ENCODE measurements at regions of chr16 and their contacts with region 1.

Region 1: DNA sequence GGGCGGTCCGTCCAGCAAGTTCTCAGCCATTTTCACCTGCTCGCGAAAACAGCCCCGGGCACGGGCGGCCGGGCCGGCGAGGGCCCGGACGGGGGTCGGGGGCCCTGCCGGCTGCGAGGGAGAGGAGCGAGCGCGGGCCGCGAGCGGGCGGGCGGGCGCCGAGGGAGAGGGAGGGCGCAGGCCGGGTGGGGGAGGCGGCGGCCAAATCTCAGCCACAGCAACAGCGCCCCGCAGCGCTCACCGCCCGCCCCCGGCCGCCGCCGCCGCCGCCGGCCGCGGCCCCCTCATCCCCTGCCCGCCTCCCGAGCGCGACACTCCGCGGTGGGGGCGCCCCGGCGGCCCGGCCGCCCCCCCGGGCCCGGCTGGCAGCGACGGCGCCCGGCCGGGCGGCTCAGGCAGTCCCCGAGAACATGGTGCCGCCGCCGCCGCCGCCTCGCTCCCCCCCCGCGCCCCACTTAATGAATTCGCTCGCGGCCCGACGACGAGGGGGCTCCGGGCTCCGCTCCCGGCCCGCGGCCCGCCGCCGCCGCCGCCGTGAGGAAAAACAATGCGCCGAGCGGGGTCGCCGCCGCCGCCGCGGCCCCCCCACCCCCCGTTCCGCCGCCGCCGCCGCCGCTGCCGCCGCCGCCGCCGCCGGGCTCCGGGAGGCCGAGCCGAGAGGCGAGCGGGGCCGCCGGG is 487 bp downstream of the CREBBP start:
- DNase-seq: peak; percentile 71 to 78
- H3K4me3 ChIP-seq: peak overlapping the region; percentile 96 to 99
- H3K27ac ChIP-seq: peak overlapping the region; percentile 83 to 99
- H3K4me1 ChIP-seq: peaks cover 4 to 13% of the 10 kb centered on the region in 2 donors
- H3K27me3 ChIP-seq: no peaks in the 10 kb centered on the region
- CTCF ChIP-seq: peak in 2 of 4 experiments; percentile 19 to 55
- POLR2A ChIP-seq: no peak

Region 2: GRCh38 chr16:3690470-3690928 is 189.5 kb before region 1 on chr16:
- intact Hi-C with region 1: loop called (anchors 10 kb)
- DNase-seq: peak; percentile 94 to 96
- H3K4me3 ChIP-seq: peak overlapping the region; percentile 26 to 28
- H3K27ac ChIP-seq: peak overlapping the region; percentile 71 to 77
- H3K4me1 ChIP-seq: no peaks in the 10 kb centered on the region
- H3K27me3 ChIP-seq: no peaks in the 10 kb centered on the region
- CTCF ChIP-seq: peak; percentile 89 to 97 (median 94)
- POLR2A ChIP-seq: peak in 1 of 2 donors; percentile 10

Region 3: GRCh38 chr16:3829631-3830536 is 50.1 kb before region 1 on chr16:
- intact Hi-C with region 1: no loop called
- DNase-seq: no peak
- H3K4me3 ChIP-seq: no peak overlapping the region
- H3K27ac ChIP-seq: no peak overlapping the region
- H3K4me1 ChIP-seq: peaks cover under 1 to 8% of the 10 kb centered on the region in 2 donors
- H3K27me3 ChIP-seq: no peaks in the 10 kb centered on the region
- CTCF ChIP-seq: no peak
- POLR2A ChIP-seq: no peak

Region 4: GRCh38 chr16:3961449-3961849 is 81.4 kb after region 1 on chr16:
- intact Hi-C with region 1: no loop called
- DNase-seq: peak in 1 of 2 donors; percentile 54
- H3K4me3 ChIP-seq: peak overlapping the region in 1 of 2 donors; percentile 43
- H3K27ac ChIP-seq: peak overlapping the region; percentile 79 to 86
- H3K4me1 ChIP-seq: no peaks in the 10 kb centered on the region
- H3K27me3 ChIP-seq: no peaks in the 10 kb centered on the region
- CTCF ChIP-seq: no peak
- POLR2A ChIP-seq: no peak

Measured in uterus (tissue), 4 donors.